ENCODE measurements at regions of chr17 and their contacts with region 1.

Region 1: DNA sequence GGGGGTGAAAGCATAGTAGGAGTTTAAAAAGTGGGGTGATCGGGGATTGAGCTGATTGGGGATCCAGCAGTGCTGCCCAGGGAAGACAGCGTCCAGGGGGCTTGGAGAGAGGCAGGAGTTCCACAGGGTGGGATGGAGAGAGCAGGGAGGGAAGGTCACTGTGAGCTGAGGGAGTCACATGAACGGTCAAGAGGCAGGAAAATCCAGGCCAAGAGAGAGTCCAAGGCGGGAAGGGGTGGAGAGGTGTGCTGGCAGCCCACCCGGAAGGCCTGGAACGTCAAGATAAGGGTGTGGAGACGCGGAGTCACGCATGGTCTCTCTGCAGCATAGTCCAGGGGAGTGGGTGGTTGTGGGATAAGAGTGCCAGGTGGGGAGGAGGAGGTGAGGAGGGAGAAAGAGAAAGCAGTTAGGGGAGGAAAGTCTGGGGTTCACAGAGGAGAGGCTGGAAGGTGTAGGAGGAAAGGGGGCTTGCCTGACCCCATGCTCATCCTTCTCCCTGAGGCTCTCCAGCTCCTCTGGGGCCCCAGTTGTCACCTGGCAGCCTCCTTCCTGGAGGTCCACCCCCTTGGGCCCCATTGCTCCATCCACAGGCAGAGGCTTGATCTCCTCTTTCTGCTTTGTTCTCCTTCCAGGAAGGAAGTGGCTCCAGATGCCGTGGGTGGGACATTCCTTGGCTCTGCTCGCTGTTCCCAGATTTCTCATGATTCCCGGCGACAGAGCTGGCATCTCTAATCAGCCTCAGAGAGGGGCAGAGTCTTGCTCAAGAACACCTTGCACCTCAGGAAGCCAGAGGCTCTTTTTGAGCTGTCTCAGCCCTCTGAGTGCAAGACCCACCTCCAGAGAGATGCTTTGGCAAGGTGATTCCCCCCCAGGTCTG is 28.7 kb downstream of the CCR7 start:
- DNase-seq: no peak
- H3K4me3 ChIP-seq: no peak overlapping the region
- H3K4me3 Mint-ChIP-seq: peak overlapping the region in 3 of 8 donors; percentile 6 to 67 (median 51)
- H3K27ac ChIP-seq: no peak overlapping the region
- H3K27ac Mint-ChIP-seq: peak overlapping the region; percentile 65 to 100 (median 88)
- H3K4me1 ChIP-seq: peaks cover 90% of the 10 kb centered on the region
- H3K4me1 Mint-ChIP-seq: peaks cover 68 to 97% (median 84%) of the 10 kb centered on the region in 4 donors
- H3K27me3 ChIP-seq: no peaks in the 10 kb centered on the region
- H3K27me3 Mint-ChIP-seq: peaks cover 0 to 6% of the 10 kb centered on the region in 2 donors

Region 2: DNA sequence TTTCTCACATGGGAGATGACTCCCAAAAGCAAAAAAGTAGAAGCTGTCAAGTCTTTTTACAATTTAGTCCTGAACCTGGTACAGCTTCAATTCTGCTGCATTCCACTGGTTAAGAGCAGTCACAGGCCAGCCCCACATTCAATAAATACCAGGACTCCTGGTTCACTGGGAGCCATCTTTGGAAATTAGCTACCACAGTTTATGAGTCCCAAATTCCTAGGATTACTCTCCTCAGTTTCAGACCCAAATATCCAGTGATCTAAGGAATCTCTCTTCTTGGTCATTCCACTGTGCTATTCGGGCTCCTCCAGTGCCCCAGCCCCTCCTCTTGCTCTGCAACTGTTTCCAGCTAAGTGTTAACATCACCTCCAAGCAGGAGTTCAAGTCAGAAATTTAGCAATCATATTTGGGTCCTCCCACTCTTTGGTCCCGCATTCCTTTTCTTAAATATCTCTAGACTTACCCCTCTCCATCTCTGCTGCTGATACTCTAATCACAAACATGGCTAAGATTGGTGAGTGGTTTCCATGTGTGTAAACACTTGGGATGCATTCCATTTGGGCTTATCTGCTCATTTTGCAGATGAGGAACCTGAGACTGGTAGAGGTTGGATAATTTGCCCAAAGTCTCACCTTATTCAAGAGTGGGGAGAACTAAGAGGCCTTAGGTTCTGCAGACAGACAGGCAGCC is 327.0 kb before region 1 on chr17:
- CTCF ChIA-PET with region 1: no interaction called
- POLR2A ChIA-PET with region 1: no interaction called
- intact Hi-C with region 1: loop called (anchors 10 kb)
- DNase-seq: no peak
- H3K4me3 ChIP-seq: no peak overlapping the region
- H3K4me3 Mint-ChIP-seq: no peak overlapping the region
- H3K27ac ChIP-seq: no peak overlapping the region
- H3K27ac Mint-ChIP-seq: no peak overlapping the region
- H3K4me1 ChIP-seq: no peaks in the 10 kb centered on the region
- H3K4me1 Mint-ChIP-seq: no peaks in the 10 kb centered on the region
- H3K27me3 ChIP-seq: no peaks in the 10 kb centered on the region
- H3K27me3 Mint-ChIP-seq: peaks cover 0 to 1% of the 10 kb centered on the region in 2 donors

Region 3: DNA sequence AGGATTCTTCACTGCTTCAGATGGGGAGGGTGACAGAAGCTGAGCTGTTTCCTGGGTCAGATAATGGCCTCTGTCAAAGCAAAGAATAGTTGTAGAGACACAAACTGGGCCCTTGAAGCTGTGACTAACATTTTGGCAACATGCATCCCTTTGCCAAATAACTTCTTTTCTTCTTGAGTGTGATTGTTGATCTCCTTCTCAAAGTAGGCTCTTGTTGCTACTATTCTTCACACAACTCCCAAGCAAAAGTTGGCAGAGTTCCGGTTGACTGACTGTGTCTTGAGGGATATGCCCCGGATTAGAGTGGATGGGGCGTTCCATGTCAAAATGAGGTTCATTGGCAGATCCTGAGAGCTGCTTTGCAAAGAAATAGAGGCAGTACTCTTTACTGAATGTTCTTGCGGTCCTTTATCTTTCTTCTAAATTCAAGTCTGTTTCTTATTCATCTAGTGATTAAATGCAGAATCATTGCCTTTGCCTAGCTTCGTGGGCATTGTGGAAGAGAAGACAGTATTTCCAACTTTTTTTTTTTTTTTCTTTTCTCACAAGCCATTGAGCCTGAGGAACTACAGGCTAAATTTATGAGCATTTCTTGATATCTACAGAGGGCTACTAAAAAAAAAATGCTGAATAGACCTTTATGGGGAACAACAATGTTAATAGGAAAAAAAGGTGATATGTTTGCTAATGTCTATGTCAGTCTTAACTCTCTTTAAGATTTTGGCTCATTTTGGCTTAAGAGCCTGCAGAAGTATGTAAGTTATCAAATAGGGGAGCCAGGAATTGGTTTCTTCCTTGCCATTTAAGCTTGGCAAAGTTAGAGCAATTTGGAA is 311.6 kb before region 1 on chr17:
- CTCF ChIA-PET with region 1: no interaction called
- POLR2A ChIA-PET with region 1: no interaction called
- intact Hi-C with region 1: no loop called
- DNase-seq: no peak
- H3K4me3 ChIP-seq: no peak overlapping the region
- H3K4me3 Mint-ChIP-seq: peak overlapping the region in 1 of 8 donors; percentile 32
- H3K27ac ChIP-seq: no peak overlapping the region
- H3K27ac Mint-ChIP-seq: peak overlapping the region in 3 of 7 donors; percentile 2 to 80 (median 72)
- H3K4me1 ChIP-seq: peaks cover 36% of the 10 kb centered on the region
- H3K4me1 Mint-ChIP-seq: peaks cover 25 to 57% (median 37%) of the 10 kb centered on the region in 4 donors
- H3K27me3 ChIP-seq: no peaks in the 10 kb centered on the region
- H3K27me3 Mint-ChIP-seq: no peaks in the 10 kb centered on the region

Region 4: GRCh38 chr17:40490289-40490853 is 46.2 kb before region 1 on chr17:
- CTCF ChIA-PET with region 1: interaction called, 91 read pairs
- POLR2A ChIA-PET with region 1: interaction called, 29 read pairs
- intact Hi-C with region 1: no loop called
- DNase-seq: no peak
- H3K4me3 ChIP-seq: no peak overlapping the region
- H3K4me3 Mint-ChIP-seq: peak overlapping the region in 4 of 8 donors; percentile 20 to 65 (median 60)
- H3K27ac ChIP-seq: no peak overlapping the region
- H3K27ac Mint-ChIP-seq: peak overlapping the region in 5 of 7 donors; percentile 29 to 88 (median 56)
- H3K4me1 ChIP-seq: peaks cover 54% of the 10 kb centered on the region
- H3K4me1 Mint-ChIP-seq: peaks cover 24 to 60% (median 46%) of the 10 kb centered on the region in 4 donors
- H3K27me3 ChIP-seq: no peaks in the 10 kb centered on the region
- H3K27me3 Mint-ChIP-seq: no peaks in the 10 kb centered on the region

Region 5: GRCh38 chr17:40699371-40699770 is 162.8 kb after region 1 on chr17:
- CTCF ChIA-PET with region 1: no interaction called
- POLR2A ChIA-PET with region 1: no interaction called
- intact Hi-C with region 1: no loop called
- DNase-seq: no peak
- H3K4me3 ChIP-seq: no peak overlapping the region
- H3K4me3 Mint-ChIP-seq: no peak overlapping the region
- H3K27ac ChIP-seq: no peak overlapping the region
- H3K27ac Mint-ChIP-seq: no peak overlapping the region
- H3K4me1 ChIP-seq: no peaks in the 10 kb centered on the region
- H3K4me1 Mint-ChIP-seq: peaks cover 0 to 8% (median 0%) of the 10 kb centered on the region in 4 donors
- H3K27me3 ChIP-seq: no peaks in the 10 kb centered on the region
- H3K27me3 Mint-ChIP-seq: peaks cover 13 to 27% of the 10 kb centered on the region in 2 donors

Region 6: GRCh38 chr17:41392278-41392677 is 855.7 kb after region 1 on chr17:
- CTCF ChIA-PET with region 1: no interaction called
- POLR2A ChIA-PET with region 1: no interaction called
- intact Hi-C with region 1: no loop called
- DNase-seq: no peak
- H3K4me3 ChIP-seq: no peak overlapping the region
- H3K4me3 Mint-ChIP-seq: no peak overlapping the region
- H3K27ac ChIP-seq: no peak overlapping the region
- H3K27ac Mint-ChIP-seq: peak overlapping the region in 1 of 7 donors; percentile 53
- H3K4me1 ChIP-seq: no peaks in the 10 kb centered on the region
- H3K4me1 Mint-ChIP-seq: peaks cover 0 to 3% (median 1%) of the 10 kb centered on the region in 4 donors
- H3K27me3 ChIP-seq: no peaks in the 10 kb centered on the region
- H3K27me3 Mint-ChIP-seq: peaks cover 2 to 4% of the 10 kb centered on the region in 2 donors

Measured in CD4-positive, alpha-beta memory T cell (primary cell).